ENCODE measurements at regions of chr1 and their contacts with region 1.

Region 1: DNA sequence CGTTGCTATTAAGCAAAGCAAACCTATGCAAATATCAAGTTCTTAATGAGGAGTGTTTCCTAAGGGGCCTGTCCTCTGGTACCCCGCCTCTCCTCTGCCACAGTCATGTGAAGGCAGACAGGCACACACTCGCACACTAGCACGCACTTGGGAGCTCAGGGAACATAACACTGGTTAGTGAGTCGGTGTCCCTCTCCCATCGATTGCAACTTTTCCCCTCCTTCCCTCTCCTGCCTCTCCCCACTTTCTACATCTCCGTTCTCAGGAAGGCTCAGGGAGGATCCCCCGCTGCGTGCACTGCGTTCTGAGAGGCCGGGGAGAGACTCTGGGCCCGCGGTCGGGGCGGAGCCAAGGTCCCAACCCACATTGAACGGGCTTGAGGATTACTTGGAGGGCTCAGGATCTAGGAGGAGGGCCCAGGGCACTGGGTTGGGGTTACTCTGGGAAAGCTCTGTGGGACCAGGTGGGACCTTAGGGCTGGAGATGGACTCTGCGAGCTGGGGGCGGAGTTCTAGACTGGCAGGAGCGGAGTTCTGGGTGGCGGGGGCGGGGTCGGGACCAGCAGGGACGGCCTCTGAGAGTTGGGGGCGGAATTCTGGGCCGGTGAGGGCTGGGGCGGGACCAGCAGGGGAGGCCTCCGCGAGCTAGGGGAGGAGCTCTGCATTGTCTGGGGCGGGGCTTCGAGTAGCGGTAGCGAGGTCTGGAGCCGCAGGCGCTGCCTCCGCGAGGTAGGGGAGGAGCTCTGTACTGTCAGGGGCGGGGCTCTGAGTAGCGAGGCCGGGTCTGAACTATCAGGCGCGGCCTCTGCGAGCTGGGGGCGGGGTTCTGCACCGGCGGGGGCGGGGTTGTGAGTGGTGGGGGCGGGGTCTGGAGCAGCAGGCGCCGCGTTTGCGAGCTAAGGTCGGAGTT is 533 bp upstream of the LEPR start:
- DNase-seq: peak; percentile 96
- ATAC-seq: peak; percentile 92
- H3K4me3 ChIP-seq: peak overlapping the region; percentile 79 to 84
- H3K27ac ChIP-seq: peak overlapping the region; percentile 71
- H3K4me1 ChIP-seq: peaks cover 24 to 49% of the 10 kb centered on the region in 2 experiments
- H3K27me3 ChIP-seq: no peaks in the 10 kb centered on the region
- CTCF ChIP-seq: no peak
- POLR2A ChIP-seq: peak; percentile 47
- RAD21 ChIP-seq: no peak

Region 2: DNA sequence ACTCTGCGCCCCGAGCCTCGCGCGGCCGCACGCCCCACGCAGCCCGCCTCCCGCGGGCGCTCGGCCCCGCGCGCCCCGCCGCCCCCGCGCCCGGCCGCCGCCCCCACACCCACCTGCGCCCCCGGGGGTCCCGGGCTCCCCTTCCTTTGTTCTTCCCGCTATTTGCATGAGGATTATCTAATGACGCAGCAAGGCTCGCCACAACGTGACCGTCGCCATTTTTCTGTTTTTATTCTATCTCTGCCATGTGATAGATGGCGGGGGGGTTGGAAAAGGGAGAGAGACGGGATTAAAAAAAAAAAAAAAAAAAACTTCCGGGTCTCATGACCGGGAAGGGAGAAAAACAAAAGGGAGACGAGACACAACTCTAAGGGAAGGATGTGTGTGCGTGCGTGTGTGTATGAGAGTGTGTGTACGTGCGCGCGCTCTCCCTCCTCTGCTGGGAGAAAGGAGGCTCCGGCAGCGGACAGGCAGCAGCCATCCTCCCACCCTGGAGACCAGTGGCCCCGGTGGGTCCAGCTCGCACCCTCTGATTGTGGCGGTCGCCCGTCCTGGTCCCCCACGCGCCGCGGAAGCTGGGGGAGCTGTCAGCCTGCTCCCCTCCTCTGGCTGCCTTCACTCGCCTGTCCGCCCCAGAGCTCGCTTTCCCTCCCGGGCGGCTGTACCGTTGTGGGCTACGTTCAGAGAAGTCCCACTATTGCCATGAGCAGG is 352.3 kb before region 1 on chr1:
- CTCF ChIA-PET with region 1: interaction called, 4 read pairs
- POLR2A ChIA-PET with region 1: interaction called, 3 read pairs
- RAD21 ChIA-PET with region 1: no interaction called
- intact Hi-C with region 1: loop called (anchors 10 kb)
- DNase-seq: peak; percentile 46
- ATAC-seq: peak; percentile 34
- H3K4me3 ChIP-seq: peak overlapping the region; percentile 68 to 76
- H3K27ac ChIP-seq: peak overlapping the region; percentile 94
- H3K4me1 ChIP-seq: peaks cover 10 to 23% of the 10 kb centered on the region in 2 experiments; a peak in 3 of 4 replicates
- H3K27me3 ChIP-seq: no peaks in the 10 kb centered on the region
- CTCF ChIP-seq: no peak
- POLR2A ChIP-seq: no peak
- RAD21 ChIP-seq: no peak

Region 3: DNA sequence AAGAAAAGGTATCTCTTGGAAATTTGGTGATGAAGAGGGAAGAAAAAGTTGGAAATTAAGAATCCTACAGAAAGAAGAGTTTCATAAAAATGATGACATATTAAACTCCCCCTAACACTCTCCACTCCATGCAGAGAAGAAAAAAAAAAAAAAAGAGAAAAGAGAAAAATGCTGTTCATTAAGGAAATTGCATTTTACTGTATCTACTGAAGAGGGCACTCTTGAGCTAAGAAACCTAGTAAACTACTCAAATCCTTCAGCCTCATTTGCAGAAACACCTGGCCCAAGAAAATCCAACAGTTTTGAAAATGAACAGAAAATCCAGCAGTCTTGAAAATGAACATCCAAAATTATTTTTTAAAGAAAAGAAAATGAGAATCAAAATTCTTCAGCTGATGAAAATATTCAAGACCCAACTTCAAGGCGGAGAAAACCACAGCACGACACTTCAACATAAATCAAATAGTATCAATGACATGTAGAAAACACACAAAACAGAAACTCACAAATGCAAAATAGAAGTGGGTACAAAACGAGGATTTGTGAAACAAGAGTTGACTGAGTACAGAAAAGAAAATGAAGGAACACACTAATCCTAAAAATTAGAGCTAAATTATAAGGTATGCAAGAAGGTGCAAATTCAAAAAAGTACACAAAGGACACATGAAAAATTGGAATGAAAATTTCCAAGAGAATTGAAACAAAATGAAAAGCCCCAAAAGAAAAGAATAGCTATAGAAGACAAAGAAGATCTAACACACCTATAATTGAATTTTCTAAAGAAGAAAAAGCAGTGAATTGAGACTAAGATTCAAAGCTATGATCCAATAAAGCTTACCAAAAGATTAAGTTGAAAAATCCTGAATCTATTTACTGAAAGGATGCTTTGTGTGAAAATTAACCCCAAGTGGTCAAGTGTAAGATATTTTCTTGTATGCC is 183.8 kb before region 1 on chr1:
- CTCF ChIA-PET with region 1: interaction called, 7 read pairs
- POLR2A ChIA-PET with region 1: no interaction called
- RAD21 ChIA-PET with region 1: interaction called in 1 of 2 experiments, 4 read pairs
- intact Hi-C with region 1: loop called (anchors 10 kb)
- DNase-seq: peak; percentile 41
- ATAC-seq: no peak
- H3K4me3 ChIP-seq: no peak overlapping the region
- H3K27ac ChIP-seq: no peak overlapping the region
- H3K4me1 ChIP-seq: no peaks in the 10 kb centered on the region
- H3K27me3 ChIP-seq: no peaks in the 10 kb centered on the region
- CTCF ChIP-seq: peak; percentile 50 to 72 (median 67); a peak in 5 of 6 replicates
- POLR2A ChIP-seq: no peak
- RAD21 ChIP-seq: peak; percentile 74

Region 4: DNA sequence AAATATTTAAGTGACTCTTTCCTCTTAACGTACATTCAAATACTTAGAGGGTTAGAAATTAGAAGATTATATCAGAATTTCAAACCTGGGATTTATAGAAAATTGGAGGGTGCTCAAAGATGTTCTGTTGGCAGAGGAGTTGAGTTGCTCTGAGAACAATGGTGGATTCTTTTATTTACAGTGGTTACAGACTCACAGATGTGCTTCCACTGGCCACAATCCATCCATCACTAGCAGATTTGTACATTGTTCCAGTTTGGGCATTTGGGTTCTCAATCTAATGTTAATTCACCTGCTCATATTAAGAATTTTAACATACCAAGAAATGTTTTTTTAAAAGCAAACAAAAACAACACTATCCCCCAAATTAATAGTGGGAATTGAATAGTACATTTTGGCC is 87.1 kb before region 1 on chr1:
- CTCF ChIA-PET with region 1: no interaction called
- POLR2A ChIA-PET with region 1: no interaction called
- RAD21 ChIA-PET with region 1: no interaction called
- intact Hi-C with region 1: no loop called
- DNase-seq: no peak
- ATAC-seq: no peak
- H3K4me3 ChIP-seq: no peak overlapping the region
- H3K27ac ChIP-seq: no peak overlapping the region
- H3K4me1 ChIP-seq: no peaks in the 10 kb centered on the region
- H3K27me3 ChIP-seq: no peaks in the 10 kb centered on the region
- CTCF ChIP-seq: no peak
- POLR2A ChIP-seq: no peak
- RAD21 ChIP-seq: no peak

Region 5: DNA sequence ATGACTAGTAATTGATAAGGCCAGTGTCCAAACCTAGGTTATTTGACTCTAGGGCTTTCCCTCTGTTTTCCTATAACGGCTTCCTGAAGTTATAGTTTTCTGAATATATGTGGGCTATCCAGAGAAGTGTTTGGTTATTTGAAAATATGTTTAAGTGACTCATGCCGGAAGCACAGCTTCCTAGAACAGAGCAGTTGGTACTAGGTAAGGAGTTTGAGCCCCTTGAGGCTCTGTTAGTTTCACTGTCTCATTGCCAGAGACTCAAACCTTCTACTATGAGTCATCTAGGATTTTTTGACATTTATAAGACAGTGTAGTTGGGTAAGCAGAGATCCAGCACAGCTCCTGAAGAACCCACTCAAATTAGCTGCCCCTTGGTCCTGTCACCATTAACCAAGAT is 26.6 kb before region 1 on chr1:
- CTCF ChIA-PET with region 1: no interaction called
- POLR2A ChIA-PET with region 1: no interaction called
- RAD21 ChIA-PET with region 1: no interaction called
- intact Hi-C with region 1: no loop called
- DNase-seq: no peak
- ATAC-seq: no peak
- H3K4me3 ChIP-seq: no peak overlapping the region
- H3K27ac ChIP-seq: no peak overlapping the region
- H3K4me1 ChIP-seq: no peaks in the 10 kb centered on the region; a peak in 1 of 4 replicates
- H3K27me3 ChIP-seq: no peaks in the 10 kb centered on the region
- CTCF ChIP-seq: no peak
- POLR2A ChIP-seq: no peak
- RAD21 ChIP-seq: no peak

Region 6: DNA sequence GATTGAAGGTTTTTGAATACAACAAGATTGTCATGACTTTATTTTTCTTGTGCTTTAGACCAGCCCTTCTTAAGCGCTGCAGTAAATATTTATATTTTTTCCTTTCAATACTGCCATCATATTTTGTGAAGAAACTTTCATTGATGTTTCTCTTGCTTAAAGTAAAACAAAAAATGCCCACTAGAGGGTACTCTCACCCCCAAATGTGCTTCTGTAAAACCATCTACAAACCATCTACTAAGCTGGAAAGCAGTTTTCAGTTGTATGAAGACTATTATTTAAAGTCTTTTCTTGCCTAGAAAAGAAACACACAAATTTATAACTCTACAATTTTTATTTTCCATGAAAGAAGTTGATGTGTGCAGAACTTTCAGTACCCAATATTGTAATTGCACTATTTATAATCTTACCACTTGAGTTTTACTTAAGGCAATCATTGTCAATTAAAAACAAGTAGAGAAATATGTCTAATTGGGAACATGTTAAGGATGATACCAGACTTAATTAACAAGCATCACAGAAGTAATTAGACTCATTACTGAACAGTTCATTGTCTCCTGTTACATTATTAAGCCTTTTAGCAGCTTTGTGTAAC is 11.3 kb after region 1 on chr1:
- CTCF ChIA-PET with region 1: interaction called, 13 read pairs
- POLR2A ChIA-PET with region 1: interaction called, 3 read pairs
- RAD21 ChIA-PET with region 1: no interaction called
- intact Hi-C with region 1: no loop called
- DNase-seq: no peak
- ATAC-seq: peak; percentile 63; the same call in 1 of the 2 replicates
- H3K4me3 ChIP-seq: no peak overlapping the region
- H3K27ac ChIP-seq: no peak overlapping the region
- H3K4me1 ChIP-seq: peaks cover 0 to 16% of the 10 kb centered on the region in 2 experiments; a peak in 2 of 4 replicates
- H3K27me3 ChIP-seq: no peaks in the 10 kb centered on the region
- CTCF ChIP-seq: peak; percentile 50 to 69 (median 54); a peak in 4 of 6 replicates
- POLR2A ChIP-seq: no peak
- RAD21 ChIP-seq: peak; percentile 57; the same call in 1 of the 2 replicates